Activated CD4-positive, alpha-beta T cell treated with anti-CD3 and anti-CD28 coated beads, Interleukin-2, amount 10 ng/mL, durations not matched to agents 24 days and 14 days (primary cell): ENCODE measurements at regions of chr2 and their contacts with region 1.

Region 1: GRCh38 chr2:61888267-61889055 is at the start of gene CCT4:
- DNase-seq: peak; percentile 97
- H3K4me3 Mint-ChIP-seq: peak within 1 kb of the TSS; percentile 99
- H3K27ac Mint-ChIP-seq: peak within 1 kb of the TSS; percentile 99
- H3K4me1 Mint-ChIP-seq: peaks cover 22% of the 10 kb centered on the region
- H3K27me3 Mint-ChIP-seq: no peaks in the 10 kb centered on the region
- total RNA-seq, gene CCT4: 398 and 407 TPM in 2 replicates

Region 2: GRCh38 chr2:60756191-60757041 is 1132.0 kb before region 1 on chr2 and contains the start of gene PAPOLG:
- intact Hi-C with region 1: loop called (anchors 1 kb)
- DNase-seq: peak; percentile 99
- H3K4me3 Mint-ChIP-seq: peak within 1 kb of the TSS; percentile 97
- H3K27ac Mint-ChIP-seq: peak within 1 kb of the TSS; percentile 99
- H3K4me1 Mint-ChIP-seq: peaks cover 29% of the 10 kb centered on the region
- H3K27me3 Mint-ChIP-seq: no peaks in the 10 kb centered on the region
- total RNA-seq, gene PAPOLG: 18.1 and 21.6 TPM in 2 replicates

Region 3: GRCh38 chr2:61470965-61471904 is 417.2 kb before region 1 on chr2 and contains the start of gene USP34:
- intact Hi-C with region 1: loop called (anchors 2 kb)
- DNase-seq: peak; percentile 96
- H3K4me3 Mint-ChIP-seq: peak within 1 kb of the TSS; percentile 98
- H3K27ac Mint-ChIP-seq: peak within 1 kb of the TSS; percentile 98
- H3K4me1 Mint-ChIP-seq: peaks cover 19% of the 10 kb centered on the region
- H3K27me3 Mint-ChIP-seq: no peaks in the 10 kb centered on the region
- total RNA-seq, gene USP34: 84.3 and 93.8 TPM in 2 replicates

Region 4: GRCh38 chr2:61854474-61855182 is 33.8 kb before region 1 on chr2:
- intact Hi-C with region 1: loop called (anchors 1 kb)
- DNase-seq: peak; percentile 96
- H3K4me3 Mint-ChIP-seq: peak overlapping the region; percentile 96
- H3K27ac Mint-ChIP-seq: peak overlapping the region; percentile 88
- H3K4me1 Mint-ChIP-seq: peaks cover 16% of the 10 kb centered on the region
- H3K27me3 Mint-ChIP-seq: no peaks in the 10 kb centered on the region

Region 5: GRCh38 chr2:61905372-61906185 is 17.1 kb after region 1 on chr2 and contains the start of gene COMMD1:
- intact Hi-C with region 1: loop called (anchors 1 kb)
- DNase-seq: peak; percentile 95
- H3K4me3 Mint-ChIP-seq: peak within 1 kb of the TSS; percentile 89
- H3K27ac Mint-ChIP-seq: peak within 1 kb of the TSS; percentile 82
- H3K4me1 Mint-ChIP-seq: peaks cover 10% of the 10 kb centered on the region
- H3K27me3 Mint-ChIP-seq: no peaks in the 10 kb centered on the region
- total RNA-seq, gene COMMD1: 27.2 and 27.6 TPM in 2 replicates

Region 6: GRCh38 chr2:62202019-62202722 is 313.7 kb after region 1 on chr2:
- intact Hi-C with region 1: loop called (anchors 1 kb)
- DNase-seq: peak; percentile 67
- H3K4me3 Mint-ChIP-seq: peak overlapping the region; percentile 89
- H3K27ac Mint-ChIP-seq: peak overlapping the region; percentile 50
- H3K4me1 Mint-ChIP-seq: peaks cover 70% of the 10 kb centered on the region
- H3K27me3 Mint-ChIP-seq: no peaks in the 10 kb centered on the region

Region 7: DNA sequence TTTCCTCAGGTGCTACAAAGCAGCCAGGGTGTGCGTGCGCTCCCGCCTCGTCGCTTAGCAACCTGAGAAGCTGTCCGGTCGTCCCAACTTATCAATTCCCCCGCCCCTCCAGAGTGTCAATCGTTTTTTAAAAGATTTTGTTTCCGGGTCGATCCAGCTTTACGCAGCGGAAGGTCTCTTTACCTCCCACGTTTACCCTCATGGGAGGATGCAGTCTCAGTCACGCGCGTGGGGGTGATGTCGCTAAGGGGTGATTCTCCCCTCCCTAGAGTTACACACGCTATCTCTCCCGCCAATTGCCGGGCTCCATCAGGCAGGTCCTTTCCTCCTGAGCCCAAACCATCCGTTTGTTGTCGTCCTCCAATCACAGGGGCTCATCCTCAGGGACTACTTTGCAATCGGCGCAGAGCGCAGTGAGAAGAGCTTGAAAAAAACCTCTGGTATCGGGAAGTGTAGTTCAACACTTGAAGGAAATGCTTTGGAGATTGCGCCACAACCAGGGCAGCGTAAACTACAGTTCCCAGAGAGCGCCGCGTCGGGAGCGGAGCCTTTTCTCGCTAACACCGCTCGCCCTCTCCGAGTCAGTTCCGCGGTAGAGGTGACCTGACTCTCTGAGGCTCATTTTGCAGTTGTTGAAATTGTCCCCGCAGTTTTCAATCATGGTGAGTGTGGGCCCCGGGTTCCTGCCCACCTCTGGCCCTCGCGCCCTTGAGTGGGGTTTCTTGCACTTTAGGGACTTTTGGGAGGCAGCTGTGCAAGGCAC is 1700.1 kb after region 1 on chr2 and contains the starts of genes MDH1 and WDPCP:
- intact Hi-C with region 1: loop called (anchors 1 kb)
- DNase-seq: peak; percentile 97
- H3K4me3 Mint-ChIP-seq: peak within 1 kb of the TSS; percentile 98
- H3K27ac Mint-ChIP-seq: peak within 1 kb of the TSS; percentile 92
- H3K4me1 Mint-ChIP-seq: peaks cover 32% of the 10 kb centered on the region
- H3K27me3 Mint-ChIP-seq: no peaks in the 10 kb centered on the region
- total RNA-seq, gene MDH1: 195 and 208 TPM in 2 replicates
- total RNA-seq, gene WDPCP: 6.0 and 8.9 TPM in 2 replicates